Caco-2 (cell line): ENCODE measurements at regions of chr1 and their contacts with region 1.

Region 1: GRCh38 chr1:32221980-32222755 is at the starts of genes EIF3I and TMEM234:
- DNase-seq: peak; percentile 84 to 88
- H3K4me3 ChIP-seq: peak within 1 kb of the TSS; percentile 73
- H3K4me3 Mint-ChIP-seq: peak within 1 kb of the TSS; percentile 89
- H3K27ac Mint-ChIP-seq: peak within 1 kb of the TSS; percentile 95
- H3K4me1 ChIP-seq: no peaks in the 10 kb centered on the region
- H3K4me1 Mint-ChIP-seq: no peaks in the 10 kb centered on the region
- H3K27me3 ChIP-seq: no peaks in the 10 kb centered on the region
- H3K27me3 Mint-ChIP-seq: no peaks in the 10 kb centered on the region
- CTCF ChIP-seq: no peak
- total RNA-seq, gene EIF3I: 128 and 153 TPM in 2 replicates
- total RNA-seq, gene TMEM234: 11.5 and 12.0 TPM in 2 replicates

Region 2: DNA sequence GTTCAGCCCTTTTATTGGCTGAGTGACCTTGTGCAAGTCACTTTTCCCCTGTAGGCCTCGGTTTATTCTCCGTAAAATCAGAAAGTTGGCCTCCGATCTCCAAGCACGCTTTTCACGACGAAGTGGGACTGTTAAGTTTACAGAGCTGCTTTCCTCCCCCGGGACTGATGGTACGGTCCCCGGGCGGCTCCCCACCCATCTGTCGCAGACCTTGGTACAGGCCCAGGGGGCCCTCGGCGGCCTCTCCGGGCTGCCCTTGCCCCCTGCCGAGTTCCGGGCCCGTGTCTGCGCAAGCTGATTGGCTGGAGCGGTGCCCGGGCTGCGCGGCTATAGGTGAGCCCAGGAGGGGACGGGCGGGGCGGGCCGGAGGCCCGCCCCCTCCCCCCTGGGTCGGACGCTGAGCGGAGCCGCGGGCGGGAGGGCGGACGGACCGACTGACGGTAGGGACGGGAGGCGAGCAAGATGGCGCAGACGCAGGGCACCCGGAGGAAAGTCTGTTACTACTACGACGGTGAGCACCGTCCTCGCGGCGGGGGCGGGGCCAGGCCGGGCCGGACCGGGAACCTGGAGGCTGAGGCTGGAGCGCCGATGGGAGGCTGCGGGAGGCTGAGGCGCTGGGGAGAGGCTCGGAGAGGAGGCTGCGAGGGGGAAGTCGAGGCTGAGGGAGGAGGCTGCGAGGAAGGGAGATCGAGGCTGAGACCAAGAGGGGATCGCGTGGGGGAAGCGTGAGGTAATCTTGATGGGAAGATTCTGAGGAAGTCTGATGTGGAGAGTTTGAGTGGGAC is 69.7 kb after region 1 on chr1 and contains the start of gene HDAC1:
- CTCF ChIA-PET with region 1: no interaction called
- POLR2A ChIA-PET with region 1: no interaction called
- intact Hi-C with region 1: loop called (anchors 2 kb)
- DNase-seq: peak; percentile 95 to 96
- H3K4me3 ChIP-seq: peak within 1 kb of the TSS; percentile 91
- H3K4me3 Mint-ChIP-seq: peak within 1 kb of the TSS; percentile 96
- H3K27ac Mint-ChIP-seq: peak within 1 kb of the TSS; percentile 91
- H3K4me1 ChIP-seq: no peaks in the 10 kb centered on the region
- H3K4me1 Mint-ChIP-seq: peaks cover 11% of the 10 kb centered on the region
- H3K27me3 ChIP-seq: no peaks in the 10 kb centered on the region
- H3K27me3 Mint-ChIP-seq: no peaks in the 10 kb centered on the region
- CTCF ChIP-seq: no peak
- total RNA-seq, gene HDAC1: 116 and 117 TPM in 2 replicates

Region 3: DNA sequence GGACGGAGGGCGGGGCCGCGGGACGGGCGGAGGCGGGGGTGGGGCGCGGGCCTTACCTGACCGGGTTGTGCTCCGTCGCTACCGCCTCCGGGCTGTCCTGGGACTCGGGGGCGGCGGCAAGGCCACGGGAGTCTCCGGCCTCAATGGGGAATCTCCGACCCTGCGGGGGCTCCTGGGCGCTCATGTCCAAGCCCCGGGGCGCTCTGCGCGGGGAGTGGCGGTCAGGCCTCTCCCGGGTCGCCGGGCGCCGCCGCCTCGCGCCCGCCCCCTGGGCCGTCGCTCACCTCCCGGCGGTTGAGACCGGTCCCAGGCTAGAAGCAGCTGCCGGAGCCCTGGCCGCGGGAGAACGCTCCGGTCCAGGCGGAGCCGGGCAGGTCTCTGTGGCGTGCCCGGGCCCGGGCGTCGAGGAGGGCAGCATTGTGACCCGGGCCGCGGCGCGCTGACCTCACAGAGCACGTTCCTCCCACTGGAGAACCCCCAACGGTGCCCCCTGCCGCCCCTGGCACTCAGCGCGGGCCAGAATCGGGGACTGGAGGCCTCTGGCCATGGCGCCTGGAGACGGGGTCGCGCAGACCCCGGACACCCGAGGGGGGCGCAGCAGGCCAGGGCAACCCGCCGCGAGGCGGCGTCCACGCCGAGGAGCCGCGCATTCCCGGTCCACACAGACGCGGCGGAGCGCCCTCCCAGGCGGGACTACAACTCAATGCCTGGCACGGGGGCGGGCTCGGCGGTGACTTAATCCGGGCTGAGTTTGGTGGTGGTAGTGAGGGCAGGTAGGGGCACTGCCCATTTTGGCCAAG is 139.7 kb after region 1 on chr1:
- CTCF ChIA-PET with region 1: no interaction called
- POLR2A ChIA-PET with region 1: no interaction called
- intact Hi-C with region 1: loop called (anchors 2 kb)
- DNase-seq: peak in 1 of 2 experiments; percentile 61
- H3K4me3 ChIP-seq: peak overlapping the region; percentile 50
- H3K4me3 Mint-ChIP-seq: peak overlapping the region; percentile 54
- H3K27ac Mint-ChIP-seq: no peak overlapping the region
- H3K4me1 ChIP-seq: peaks cover 19% of the 10 kb centered on the region
- H3K4me1 Mint-ChIP-seq: peaks cover 14% of the 10 kb centered on the region
- H3K27me3 ChIP-seq: no peaks in the 10 kb centered on the region
- H3K27me3 Mint-ChIP-seq: no peaks in the 10 kb centered on the region
- CTCF ChIP-seq: peak; percentile 16 to 43

Region 4: GRCh38 chr1:32448773-32449456 is 226.7 kb after region 1 on chr1:
- CTCF ChIA-PET with region 1: no interaction called
- POLR2A ChIA-PET with region 1: no interaction called
- intact Hi-C with region 1: no loop called
- DNase-seq: peak; percentile 38 to 51
- H3K4me3 ChIP-seq: no peak overlapping the region
- H3K4me3 Mint-ChIP-seq: no peak overlapping the region
- H3K27ac Mint-ChIP-seq: no peak overlapping the region
- H3K4me1 ChIP-seq: no peaks in the 10 kb centered on the region
- H3K4me1 Mint-ChIP-seq: peaks cover 5% of the 10 kb centered on the region
- H3K27me3 ChIP-seq: no peaks in the 10 kb centered on the region
- H3K27me3 Mint-ChIP-seq: peaks cover 5% of the 10 kb centered on the region
- CTCF ChIP-seq: no peak